Naive thymus-derived CD4-positive, alpha-beta T cell (primary cell): ENCODE measurements at regions of chr2 and their contacts with region 1.

Region 1: DNA sequence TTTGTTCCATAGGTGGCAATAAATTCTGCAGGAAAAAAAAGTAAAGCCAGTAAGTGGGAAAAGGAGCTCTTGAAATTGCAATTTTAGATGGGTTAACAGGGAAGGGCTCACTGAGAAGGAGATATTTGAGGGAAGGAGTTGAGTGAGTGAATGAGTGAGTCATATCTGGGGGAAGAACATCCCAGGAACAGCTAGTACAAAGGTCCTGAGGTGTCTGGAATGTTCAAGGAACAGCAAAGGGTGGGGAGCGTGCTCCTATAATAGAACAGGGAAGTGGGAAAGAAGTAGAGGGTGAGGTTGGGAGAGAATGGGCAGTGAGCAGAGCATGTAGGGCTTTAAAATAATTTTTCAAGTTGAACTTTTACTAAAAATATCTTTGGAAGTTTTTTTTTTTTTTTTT is 68.0 kb upstream of the PSME4 start:
- DNase-seq: no peak
- ATAC-seq: no peak
- H3K4me3 ChIP-seq: no peak overlapping the region
- H3K4me3 Mint-ChIP-seq: no peak overlapping the region
- H3K27ac ChIP-seq: no peak overlapping the region
- H3K27ac Mint-ChIP-seq: no peak overlapping the region
- H3K4me1 ChIP-seq: peaks cover 0 to 8% of the 10 kb centered on the region in 2 donors
- H3K4me1 Mint-ChIP-seq: no peaks in the 10 kb centered on the region
- H3K27me3 ChIP-seq: no peaks in the 10 kb centered on the region
- H3K27me3 Mint-ChIP-seq: no peaks in the 10 kb centered on the region

Region 2: GRCh38 chr2:53987336-53987921 is 51.4 kb before region 1 on chr2:
- CTCF ChIA-PET with region 1: interaction called, 10 read pairs
- POLR2A ChIA-PET with region 1: no interaction called
- intact Hi-C with region 1: no loop called
- DNase-seq: no peak
- ATAC-seq: no peak
- H3K4me3 ChIP-seq: no peak overlapping the region
- H3K4me3 Mint-ChIP-seq: peak overlapping the region in 3 of 10 donors; percentile 8 to 24 (median 20)
- H3K27ac ChIP-seq: no peak overlapping the region
- H3K27ac Mint-ChIP-seq: peak overlapping the region in 8 of 9 donors; percentile 6 to 82 (median 44)
- H3K4me1 ChIP-seq: peaks cover 0 to 13% of the 10 kb centered on the region in 2 donors
- H3K4me1 Mint-ChIP-seq: peaks cover 13 to 54% (median 31%) of the 10 kb centered on the region in 7 donors
- H3K27me3 ChIP-seq: no peaks in the 10 kb centered on the region
- H3K27me3 Mint-ChIP-seq: no peaks in the 10 kb centered on the region

Region 3: DNA sequence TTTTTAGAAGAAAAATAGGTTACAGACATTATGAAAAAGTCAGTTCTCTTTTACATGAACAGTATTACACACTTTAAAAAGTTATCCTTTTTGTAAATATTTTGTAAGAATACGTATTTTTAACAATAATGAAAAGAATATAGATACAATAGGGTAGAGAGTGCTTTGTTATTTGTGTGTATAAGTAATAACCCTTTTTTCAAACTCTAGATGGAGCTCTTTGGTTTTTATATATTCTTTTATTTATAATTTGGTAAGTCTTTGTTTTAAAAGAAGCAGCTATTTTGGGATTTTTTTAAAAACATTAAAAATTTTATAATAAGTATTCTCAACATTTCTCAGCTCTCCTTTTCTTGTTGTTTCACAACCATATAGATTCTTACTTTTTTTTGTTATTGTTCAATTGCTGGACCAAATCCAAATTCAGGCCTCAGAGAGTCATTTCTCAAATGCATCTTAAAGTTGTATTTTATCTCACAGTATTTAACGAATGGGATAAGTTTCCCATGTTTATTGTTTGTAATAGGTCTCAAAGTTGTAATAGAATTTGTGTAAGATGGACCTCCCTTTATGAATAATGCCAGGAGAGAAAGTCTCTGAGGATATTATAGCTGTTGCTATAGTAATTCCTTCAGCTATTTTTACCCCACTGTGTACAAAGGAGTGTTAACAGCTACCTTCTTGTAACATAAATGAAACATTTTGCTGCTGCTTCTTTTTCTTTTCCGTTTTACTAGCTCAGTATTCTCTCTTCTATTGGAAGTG is 123.0 kb after region 1 on chr2:
- CTCF ChIA-PET with region 1: no interaction called
- POLR2A ChIA-PET with region 1: no interaction called
- intact Hi-C with region 1: no loop called
- DNase-seq: no peak
- ATAC-seq: no peak
- H3K4me3 ChIP-seq: no peak overlapping the region
- H3K4me3 Mint-ChIP-seq: no peak overlapping the region
- H3K27ac ChIP-seq: no peak overlapping the region
- H3K27ac Mint-ChIP-seq: no peak overlapping the region
- H3K4me1 ChIP-seq: no peaks in the 10 kb centered on the region
- H3K4me1 Mint-ChIP-seq: no peaks in the 10 kb centered on the region
- H3K27me3 ChIP-seq: no peaks in the 10 kb centered on the region
- H3K27me3 Mint-ChIP-seq: no peaks in the 10 kb centered on the region